HEK293 (cell line): ENCODE measurements at regions of chr17 and their contacts with region 1.

Region 1: GRCh38 chr17:29116804-29117772 is 63.1 kb downstream of the MYO18A start:
- H3K4me3 ChIP-seq: no peak overlapping the region
- H3K27ac ChIP-seq: no peak overlapping the region
- H3K4me1 ChIP-seq: no peaks in the 10 kb centered on the region
- CTCF ChIP-seq: peak; percentile 89

Region 2: DNA sequence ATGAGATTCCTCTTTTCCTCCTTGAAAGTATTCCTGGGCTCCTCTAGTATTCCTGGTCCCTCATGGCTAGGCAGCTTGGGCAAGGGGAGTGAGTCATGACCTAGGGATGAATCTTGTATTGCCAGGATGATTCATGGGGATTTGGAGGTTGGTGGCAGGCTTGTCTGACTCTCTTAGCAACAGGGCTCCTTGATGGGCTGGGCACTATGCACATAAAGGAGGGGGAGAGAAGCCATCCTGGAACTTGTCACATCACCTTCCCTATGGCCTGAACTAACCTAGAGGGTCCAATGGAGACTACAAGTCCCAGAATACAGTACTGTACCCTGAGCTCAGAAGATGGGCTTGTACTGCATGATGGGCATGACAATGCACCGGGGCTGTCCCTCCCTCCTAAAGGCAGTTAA is 109.1 kb before region 1 on chr17:
- CTCF ChIA-PET with region 1: interaction called, 18 read pairs
- POLR2A ChIA-PET with region 1: no interaction called
- H3K4me3 ChIP-seq: no peak overlapping the region
- H3K27ac ChIP-seq: no peak overlapping the region
- H3K4me1 ChIP-seq: 0 out of 2 replicates have a peak, but pooled peaks cover 4% of the 10 kb centered on the region
- CTCF ChIP-seq: no peak

Region 3: DNA sequence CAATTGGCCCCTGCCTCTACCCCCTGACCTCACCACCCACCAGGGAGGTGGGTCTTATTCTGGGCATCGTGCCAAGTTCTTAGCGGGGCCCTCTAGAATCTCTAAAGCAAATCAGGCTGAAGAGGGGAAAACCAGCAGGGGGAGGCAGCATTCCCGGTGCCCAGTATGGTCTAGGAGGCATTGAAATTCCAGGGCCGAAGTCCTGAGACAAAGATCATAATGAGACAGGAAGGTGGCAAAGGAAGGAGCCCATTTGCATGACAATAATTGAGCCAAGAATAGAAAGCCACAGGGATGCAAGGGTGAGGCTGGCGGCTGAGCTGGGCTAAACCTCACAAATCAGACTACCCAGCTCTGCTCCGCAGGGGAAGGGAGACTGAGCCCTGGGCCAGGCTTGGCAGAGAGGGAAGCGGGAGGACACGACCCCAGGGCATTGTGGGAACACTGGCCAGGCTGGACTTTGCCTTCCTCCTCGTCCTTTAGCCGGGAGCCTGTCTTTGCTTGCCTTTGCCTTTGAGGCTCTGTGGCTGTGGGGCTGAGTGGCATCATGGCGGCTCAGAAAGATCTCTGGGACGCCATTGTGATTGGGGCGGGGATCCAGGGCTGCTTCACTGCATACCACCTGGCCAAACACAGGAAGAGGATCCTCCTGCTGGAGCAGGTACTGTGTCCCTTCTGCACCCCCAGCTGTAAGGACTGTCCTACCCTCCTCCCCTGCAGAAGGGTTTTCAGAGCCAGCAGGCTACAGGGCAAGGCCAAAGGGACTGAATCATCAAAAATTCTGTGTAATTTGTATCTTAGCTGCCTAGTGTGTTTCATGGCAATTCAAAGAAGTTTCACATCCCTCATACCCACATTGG is 74.2 kb before region 1 on chr17 and contains the start of gene PIPOX:
- CTCF ChIA-PET with region 1: interaction called, 25 read pairs
- POLR2A ChIA-PET with region 1: no interaction called
- H3K4me3 ChIP-seq: no peak within 1 kb of the TSS
- H3K27ac ChIP-seq: no peak within 1 kb of the TSS
- H3K4me1 ChIP-seq: peaks cover 5% of the 10 kb centered on the region
- CTCF ChIP-seq: peak; percentile 38

Region 4: GRCh38 chr17:29063992-29064391 is 53.1 kb before region 1 on chr17:
- CTCF ChIA-PET with region 1: interaction called, 10 read pairs
- POLR2A ChIA-PET with region 1: interaction called, 5 read pairs
- H3K4me3 ChIP-seq: no peak overlapping the region
- H3K27ac ChIP-seq: no peak overlapping the region
- H3K4me1 ChIP-seq: no peaks in the 10 kb centered on the region
- CTCF ChIP-seq: no peak

Region 5: GRCh38 chr17:29158096-29158487 is 41.0 kb after region 1 on chr17:
- CTCF ChIA-PET with region 1: no interaction called
- POLR2A ChIA-PET with region 1: no interaction called
- H3K4me3 ChIP-seq: no peak overlapping the region
- H3K27ac ChIP-seq: no peak overlapping the region
- H3K4me1 ChIP-seq: peaks cover 11% of the 10 kb centered on the region
- CTCF ChIP-seq: no peak

Region 6: DNA sequence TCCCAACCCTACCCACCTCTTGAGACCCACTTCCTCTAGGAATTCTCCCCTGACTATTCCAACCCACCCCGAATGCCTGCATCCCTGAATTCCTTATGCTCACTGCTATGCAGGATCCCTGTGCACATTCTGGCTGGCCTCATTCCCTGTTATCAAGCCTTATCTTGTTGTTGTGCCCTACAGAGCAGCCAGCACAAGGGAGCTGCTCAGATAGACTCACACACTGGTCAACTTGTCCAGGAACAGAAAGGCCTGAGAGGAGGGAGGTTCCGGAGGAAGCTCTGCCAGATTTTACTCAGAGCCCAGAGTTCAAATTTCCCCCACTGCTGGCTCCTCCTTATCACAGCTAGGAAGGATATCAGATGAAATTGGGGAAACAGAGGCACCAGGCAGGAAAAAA is 88.0 kb after region 1 on chr17:
- CTCF ChIA-PET with region 1: interaction called, 12 read pairs
- POLR2A ChIA-PET with region 1: no interaction called
- H3K4me3 ChIP-seq: no peak overlapping the region
- H3K27ac ChIP-seq: no peak overlapping the region
- H3K4me1 ChIP-seq: no peaks in the 10 kb centered on the region
- CTCF ChIP-seq: no peak

Region 7: GRCh38 chr17:29331708-29332085 is 214.6 kb after region 1 on chr17:
- CTCF ChIA-PET with region 1: no interaction called
- POLR2A ChIA-PET with region 1: no interaction called
- H3K4me3 ChIP-seq: no peak overlapping the region
- H3K27ac ChIP-seq: no peak overlapping the region
- H3K4me1 ChIP-seq: no peaks in the 10 kb centered on the region
- CTCF ChIP-seq: no peak